Pancreas (tissue), 10 donors: ENCODE measurements at regions of chr15 and their contacts with region 1.

Region 1: GRCh38 chr15:92097474-92098178 is 244.1 kb downstream of the SLCO3A1 start:
- DNase-seq: peak in 4 of 6 donors; percentile 23 to 67 (median 52)
- ATAC-seq: peak; percentile 77 to 97 (median 91)
- H3K4me3 ChIP-seq: no peak overlapping the region
- H3K27ac ChIP-seq: no peak overlapping the region
- H3K4me1 ChIP-seq: no peaks in the 10 kb centered on the region
- H3K27me3 ChIP-seq: no peaks in the 10 kb centered on the region
- CTCF ChIP-seq: peak; percentile 52 to 83 (median 64)

Region 2: GRCh38 chr15:92226014-92226612 is 128.5 kb after region 1 on chr15:
- intact Hi-C with region 1: loop called in 1 of 3 experiments (anchors 10 kb)
- DNase-seq: no peak
- ATAC-seq: peak in 2 of 4 donors; percentile 50 to 75
- H3K4me3 ChIP-seq: no peak overlapping the region
- H3K27ac ChIP-seq: no peak overlapping the region
- H3K4me1 ChIP-seq: no peaks in the 10 kb centered on the region
- H3K27me3 ChIP-seq: no peaks in the 10 kb centered on the region
- CTCF ChIP-seq: peak in 3 of 4 donors; percentile 8 to 26 (median 17)

Region 3: GRCh38 chr15:92724144-92724543 is 626.5 kb after region 1 on chr15:
- intact Hi-C with region 1: loop called in 1 of 3 experiments (anchors 10 kb)
- DNase-seq: no peak
- ATAC-seq: no peak
- H3K4me3 ChIP-seq: no peak overlapping the region
- H3K27ac ChIP-seq: no peak overlapping the region
- H3K4me1 ChIP-seq: no peaks in the 10 kb centered on the region
- H3K27me3 ChIP-seq: no peaks in the 10 kb centered on the region
- CTCF ChIP-seq: no peak